SK-N-SH (cell line): ENCODE measurements at regions of chr5 and their contacts with region 1.

Region 1: DNA sequence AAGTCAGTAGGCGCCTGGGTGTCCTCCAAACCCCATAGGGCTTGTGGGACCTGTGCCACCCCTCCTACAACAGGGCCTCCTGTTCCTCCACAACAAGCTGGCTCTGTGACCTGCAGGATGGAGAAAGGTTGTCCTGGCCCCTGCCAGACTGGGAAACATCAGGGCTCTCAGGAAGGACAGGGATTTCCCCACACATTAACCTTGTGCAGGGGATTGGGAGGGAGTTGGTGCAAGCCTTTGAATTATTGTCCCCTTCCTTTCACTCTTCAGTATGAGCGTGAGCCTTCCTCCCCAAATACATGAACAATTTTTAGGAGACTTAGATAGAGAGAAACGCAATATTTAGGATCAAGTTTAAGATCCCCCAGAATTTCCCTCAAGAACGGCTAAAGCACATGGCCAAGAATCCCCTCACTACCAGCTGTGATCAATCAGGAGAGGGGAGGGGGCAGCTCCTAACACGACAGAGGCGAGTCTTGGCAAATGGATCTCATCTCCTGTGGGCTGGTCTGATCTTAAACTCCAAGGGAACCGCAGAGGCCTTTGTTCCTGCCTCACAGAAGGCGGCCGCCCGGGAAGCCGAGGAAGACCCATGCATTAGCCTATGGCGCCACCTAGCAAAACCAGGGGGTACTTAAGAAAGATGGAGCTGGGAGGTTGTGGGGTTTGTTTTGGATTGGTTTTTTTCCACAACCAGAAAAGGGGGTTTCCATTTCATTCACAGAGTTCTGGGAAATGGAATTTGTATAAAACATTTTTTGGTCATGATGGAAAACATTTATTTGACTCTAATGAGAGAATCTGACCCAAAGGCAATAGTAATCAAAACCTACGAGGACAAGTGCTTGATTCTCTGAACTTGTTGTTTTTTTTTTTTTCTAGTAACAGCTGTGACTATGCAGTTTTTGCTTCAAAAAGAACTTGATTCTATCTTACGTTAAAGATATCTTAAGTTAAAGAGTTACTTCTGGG is 36.1 kb upstream of the OSMR start:
- DNase-seq: peak; percentile 87
- H3K4me3 ChIP-seq: no peak overlapping the region
- H3K27ac ChIP-seq: peak overlapping the region; percentile 21 to 22; a peak in 3 of 4 replicates
- H3K4me1 ChIP-seq: peaks cover 15 to 21% of the 10 kb centered on the region in 2 experiments
- H3K27me3 ChIP-seq: no peaks in the 10 kb centered on the region
- CTCF ChIP-seq: peak; percentile 87
- EP300 ChIP-seq: 0 out of 4 replicates have a peak, but pooled peaks of 1 of the 2 experiments have one; percentile 8
- RAD21 ChIP-seq: peak; percentile 99

Region 2: DNA sequence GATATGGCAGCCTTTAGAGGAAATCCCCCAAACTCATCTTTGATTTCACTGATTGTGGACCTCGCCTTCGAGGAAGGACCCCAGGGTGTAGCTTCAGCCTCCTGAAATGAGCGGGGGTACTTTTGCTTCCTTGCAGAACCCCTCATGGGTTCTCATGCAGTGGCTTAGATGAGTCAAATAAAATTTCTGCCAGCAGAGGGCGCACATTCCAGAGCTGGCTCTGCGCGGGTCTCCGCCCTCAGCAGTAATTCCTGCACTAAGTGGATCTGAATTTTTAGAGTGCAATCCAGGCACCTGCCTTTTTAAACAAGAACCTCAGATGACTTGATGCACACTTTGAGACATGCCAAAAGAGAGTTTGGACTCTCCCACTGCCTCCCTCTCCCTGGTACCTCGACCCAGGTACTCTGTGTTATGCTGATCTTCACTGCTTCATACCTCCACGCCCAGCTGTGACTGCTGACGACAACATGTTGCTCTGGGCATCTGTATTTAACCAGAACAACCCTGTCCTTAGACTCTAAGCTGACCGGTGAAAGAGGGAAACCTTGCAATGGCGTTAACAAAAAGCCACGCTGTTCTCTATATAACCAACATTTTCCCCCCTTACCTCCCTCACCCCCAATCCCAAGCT is 544.0 kb before region 1 on chr5:
- CTCF ChIA-PET with region 1: interaction called, 12 read pairs
- POLR2A ChIA-PET with region 1: no interaction called
- DNase-seq: peak; percentile 67
- H3K4me3 ChIP-seq: peak overlapping the region in 1 of 2 experiments; percentile 41; a peak in 2 of 4 replicates
- H3K27ac ChIP-seq: no peak overlapping the region
- H3K4me1 ChIP-seq: peaks cover 0 to 6% of the 10 kb centered on the region in 2 experiments; a peak in 2 of 4 replicates
- H3K27me3 ChIP-seq: peaks cover 25% of the 10 kb centered on the region; the same call in 1 of the 2 replicates
- CTCF ChIP-seq: peak; percentile 83
- EP300 ChIP-seq: no peak
- RAD21 ChIP-seq: peak; percentile 65

Region 3: GRCh38 chr5:38420691-38421390 is 388.8 kb before region 1 on chr5:
- CTCF ChIA-PET with region 1: interaction called, 135 read pairs
- POLR2A ChIA-PET with region 1: no interaction called
- DNase-seq: peak; percentile 67
- H3K4me3 ChIP-seq: no peak overlapping the region
- H3K27ac ChIP-seq: no peak overlapping the region
- H3K4me1 ChIP-seq: peaks cover 3 to 7% of the 10 kb centered on the region in 2 experiments; a peak in 1 of 4 replicates
- H3K27me3 ChIP-seq: no peaks in the 10 kb centered on the region
- CTCF ChIP-seq: peak; percentile 86
- EP300 ChIP-seq: no peak
- RAD21 ChIP-seq: peak; percentile 79

Region 4: DNA sequence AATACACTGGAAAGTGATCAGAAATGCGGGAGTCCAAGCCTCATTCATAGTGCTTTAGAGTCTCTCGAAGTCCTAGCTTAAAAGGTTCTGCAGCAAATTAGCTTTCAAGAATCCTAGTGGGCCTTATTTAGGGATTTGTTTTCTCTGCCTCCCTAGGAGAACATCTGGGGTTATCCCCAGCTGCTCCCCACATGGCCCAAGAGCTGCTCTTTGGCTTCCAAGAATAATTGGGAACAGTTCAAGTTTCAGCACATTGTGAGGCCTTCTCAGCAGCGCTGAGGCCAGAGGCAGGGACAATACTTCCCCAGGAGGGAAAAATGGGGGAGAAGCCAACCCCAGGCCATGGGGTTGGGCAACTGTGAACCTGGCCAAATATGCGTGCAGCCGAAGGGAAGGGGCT is 361.9 kb before region 1 on chr5:
- CTCF ChIA-PET with region 1: interaction called, 338 read pairs
- POLR2A ChIA-PET with region 1: no interaction called
- DNase-seq: no peak
- H3K4me3 ChIP-seq: no peak overlapping the region
- H3K27ac ChIP-seq: no peak overlapping the region
- H3K4me1 ChIP-seq: peaks cover 0 to 5% of the 10 kb centered on the region in 2 experiments; a peak in 1 of 4 replicates
- H3K27me3 ChIP-seq: no peaks in the 10 kb centered on the region
- CTCF ChIP-seq: no peak
- EP300 ChIP-seq: no peak
- RAD21 ChIP-seq: no peak

Region 5: GRCh38 chr5:38795986-38796741 is 13.5 kb before region 1 on chr5:
- CTCF ChIA-PET with region 1: interaction called, 42 read pairs
- POLR2A ChIA-PET with region 1: no interaction called
- DNase-seq: no peak
- H3K4me3 ChIP-seq: no peak overlapping the region
- H3K27ac ChIP-seq: peak overlapping the region in 1 of 2 experiments; percentile 20; a peak in 1 of 4 replicates
- H3K4me1 ChIP-seq: no peaks in the 10 kb centered on the region; a peak in 1 of 4 replicates
- H3K27me3 ChIP-seq: no peaks in the 10 kb centered on the region
- CTCF ChIP-seq: no peak
- EP300 ChIP-seq: no peak
- RAD21 ChIP-seq: no peak

Region 6: DNA sequence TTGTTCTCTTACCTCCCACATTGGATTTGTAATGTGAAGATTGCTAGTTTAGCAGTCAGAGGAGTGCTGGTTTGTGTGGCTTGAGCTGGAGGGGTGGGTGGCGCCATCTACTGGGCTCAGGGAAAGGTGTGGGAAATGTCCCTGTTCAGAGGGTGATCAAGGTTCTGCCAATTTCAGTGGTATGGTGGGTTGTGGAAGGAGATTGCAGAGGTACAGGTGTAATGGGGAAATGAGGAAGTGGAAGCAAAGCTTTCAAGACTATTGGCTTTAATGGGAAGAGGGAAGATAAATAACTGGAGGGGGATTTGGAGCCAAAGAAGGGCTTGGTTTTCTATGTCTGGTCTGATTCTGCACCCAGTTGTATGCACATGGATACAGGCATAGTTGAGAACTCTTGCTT is 112.5 kb after region 1 on chr5:
- CTCF ChIA-PET with region 1: interaction called, 16 read pairs
- POLR2A ChIA-PET with region 1: no interaction called
- DNase-seq: peak; percentile 64
- H3K4me3 ChIP-seq: no peak overlapping the region; a peak in 1 of 4 replicates
- H3K27ac ChIP-seq: no peak overlapping the region
- H3K4me1 ChIP-seq: peaks cover 0 to 23% of the 10 kb centered on the region in 2 experiments; a peak in 2 of 4 replicates
- H3K27me3 ChIP-seq: no peaks in the 10 kb centered on the region
- CTCF ChIP-seq: peak; percentile 88
- EP300 ChIP-seq: no peak
- RAD21 ChIP-seq: peak; percentile 73